Uterus (tissue), 4 donors: ENCODE measurements at regions of chr19 and their contacts with region 1.

Region 1: DNA sequence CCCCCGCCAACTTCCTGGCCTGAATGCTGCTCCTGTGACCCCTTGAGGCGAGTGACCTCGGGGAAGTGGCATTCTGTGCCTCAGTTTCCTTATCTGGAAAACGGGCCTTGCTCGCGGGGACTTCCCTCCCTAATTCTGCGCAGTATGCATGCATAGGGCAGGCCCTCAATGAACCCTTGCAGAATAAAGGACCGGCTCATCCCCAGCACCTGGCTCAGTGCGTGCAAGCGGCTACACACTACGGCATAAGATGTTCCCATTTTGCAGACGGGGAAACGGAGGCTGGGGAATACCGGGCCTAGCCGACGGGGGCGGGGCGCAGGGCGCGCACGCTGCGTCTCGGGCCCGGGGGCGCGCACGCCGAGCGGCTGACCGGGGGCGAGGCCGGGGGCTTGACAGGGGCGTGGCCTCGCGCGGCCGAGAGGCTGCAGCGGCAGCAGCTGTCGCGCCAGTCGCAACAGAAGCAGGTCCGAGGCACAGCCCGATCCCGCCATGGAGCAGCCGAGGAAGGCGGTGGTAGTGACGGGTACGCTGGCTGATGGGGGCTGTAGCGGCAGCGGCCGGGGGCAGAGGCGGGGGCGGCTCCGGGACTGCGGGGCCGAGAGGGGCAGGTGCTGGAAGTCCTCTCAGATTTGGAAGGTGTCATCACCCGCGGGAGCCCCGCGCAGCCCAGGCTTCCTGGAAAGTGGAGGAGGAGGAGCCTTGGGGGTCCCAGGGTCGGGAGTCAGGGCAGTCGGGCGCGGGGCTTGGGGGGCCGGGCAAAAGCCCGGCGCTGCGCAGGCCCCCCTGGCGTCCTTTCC is at the start of gene PGPEP1:
- DNase-seq: peak; percentile 52 to 72
- H3K4me3 ChIP-seq: peak within 1 kb of the TSS; percentile 76 to 80
- H3K27ac ChIP-seq: peak within 1 kb of the TSS; percentile 81 to 87
- H3K4me1 ChIP-seq: no peaks in the 10 kb centered on the region
- H3K27me3 ChIP-seq: no peaks in the 10 kb centered on the region
- CTCF ChIP-seq: peak in 2 of 4 experiments; percentile 10 to 14
- POLR2A ChIP-seq: peak; percentile 45 to 65
- total RNA-seq, gene PGPEP1: 21.2 to 67.9 (median 38.1) TPM

Region 2: GRCh38 chr19:18419195-18419698 is 78.9 kb after region 1 on chr19 and contains the start of gene SSBP4:
- intact Hi-C with region 1: loop called (anchors 10 kb)
- DNase-seq: peak; percentile 62 to 80
- H3K4me3 ChIP-seq: peak within 1 kb of the TSS; percentile 37 to 62
- H3K27ac ChIP-seq: peak within 1 kb of the TSS; percentile 90 to 93
- H3K4me1 ChIP-seq: peaks cover 0 to 33% of the 10 kb centered on the region in 2 donors
- H3K27me3 ChIP-seq: no peaks in the 10 kb centered on the region
- CTCF ChIP-seq: peak in 3 of 4 experiments; percentile 50 to 67 (median 66)
- POLR2A ChIP-seq: peak; percentile 50 to 76
- total RNA-seq, gene SSBP4: 23.6 to 105 (median 54.8) TPM